B cell (primary cell): ENCODE measurements at regions of chr10 and their contacts with region 1.

Region 1: GRCh38 chr10:70404036-70404786 is at the start of gene EIF4EBP2:
- DNase-seq: peak; percentile 97
- ATAC-seq: peak; percentile 99
- H3K4me3 ChIP-seq: peak within 1 kb of the TSS; percentile 53 to 88 (median 77)
- H3K4me3 Mint-ChIP-seq: peak within 1 kb of the TSS; percentile 94
- H3K27ac ChIP-seq: peak within 1 kb of the TSS; percentile 11 to 84
- H3K27ac Mint-ChIP-seq: peak within 1 kb of the TSS; percentile 96
- H3K4me1 ChIP-seq: peaks cover 23 to 24% of the 10 kb centered on the region in 2 donors
- H3K4me1 Mint-ChIP-seq: peaks cover 43% of the 10 kb centered on the region
- H3K27me3 ChIP-seq: no peaks in the 10 kb centered on the region
- H3K27me3 Mint-ChIP-seq: no peaks in the 10 kb centered on the region
- CTCF ChIP-seq: no peak
- total RNA-seq, gene EIF4EBP2: 37.8 and 38.2 TPM in 2 replicates

Region 2: DNA sequence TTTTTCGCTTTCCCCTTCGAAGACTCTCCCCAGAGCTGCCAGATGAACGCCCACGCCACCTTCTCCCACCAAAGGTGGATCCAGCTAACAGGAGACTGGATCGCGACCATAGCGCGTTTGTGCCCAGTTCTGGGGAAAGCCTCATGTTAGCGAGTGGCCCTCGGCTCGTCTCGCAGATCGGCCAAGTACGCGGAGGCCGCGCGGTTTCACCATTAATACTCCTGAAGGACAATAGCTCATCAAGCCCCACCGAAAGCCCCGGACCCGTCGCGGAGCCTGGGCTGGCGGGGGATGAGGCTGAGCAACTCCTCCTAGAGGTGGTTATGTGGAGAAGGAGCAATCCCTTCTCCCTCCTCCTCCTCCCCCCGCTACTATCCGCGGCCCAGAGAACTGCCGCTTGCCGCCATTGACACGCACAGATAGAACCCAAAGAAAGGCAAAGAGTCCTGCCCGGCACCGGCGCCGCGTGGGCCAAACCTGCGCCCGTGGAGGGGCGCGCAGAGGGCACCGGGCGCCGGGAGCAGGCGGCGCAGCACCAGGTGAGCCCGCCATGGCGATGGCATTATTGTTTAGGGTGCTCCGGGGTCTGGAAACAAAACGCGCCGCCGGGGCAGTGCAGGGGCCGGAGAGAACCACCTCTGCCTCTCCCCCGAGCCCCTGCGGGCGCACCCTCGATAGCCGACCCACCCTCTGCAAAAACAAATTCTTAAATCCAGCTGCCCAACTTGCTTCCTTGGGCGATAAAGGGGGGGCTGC is 351.6 kb before region 1 on chr10 and contains the start of gene MACROH2A2:
- CTCF ChIA-PET with region 1: no interaction called
- POLR2A ChIA-PET with region 1: no interaction called
- intact Hi-C with region 1: no loop called
- DNase-seq: no peak
- ATAC-seq: no peak
- H3K4me3 ChIP-seq: no peak within 1 kb of the TSS
- H3K4me3 Mint-ChIP-seq: peak within 1 kb of the TSS; percentile 74
- H3K27ac ChIP-seq: no peak within 1 kb of the TSS
- H3K27ac Mint-ChIP-seq: no peak within 1 kb of the TSS
- H3K4me1 ChIP-seq: peaks cover 8 to 10% of the 10 kb centered on the region in 2 donors
- H3K4me1 Mint-ChIP-seq: peaks cover 10% of the 10 kb centered on the region
- H3K27me3 ChIP-seq: peaks cover 0 to 19% (median 13%) of the 10 kb centered on the region in 4 experiments
- H3K27me3 Mint-ChIP-seq: peaks cover 49% of the 10 kb centered on the region
- CTCF ChIP-seq: no peak
- total RNA-seq, gene MACROH2A2: not detected in 2 replicates

Region 3: GRCh38 chr10:70169649-70170364 is 234.4 kb before region 1 on chr10:
- CTCF ChIA-PET with region 1: interaction called, 4 read pairs
- POLR2A ChIA-PET with region 1: no interaction called
- intact Hi-C with region 1: loop called (anchors 1 kb)
- DNase-seq: no peak
- ATAC-seq: peak; percentile 18
- H3K4me3 ChIP-seq: peak overlapping the region; percentile 71 to 96 (median 86)
- H3K4me3 Mint-ChIP-seq: peak overlapping the region; percentile 91
- H3K27ac ChIP-seq: peak overlapping the region; percentile 80 to 93
- H3K27ac Mint-ChIP-seq: peak overlapping the region; percentile 94
- H3K4me1 ChIP-seq: peaks cover 21 to 27% of the 10 kb centered on the region in 2 donors
- H3K4me1 Mint-ChIP-seq: peaks cover 49% of the 10 kb centered on the region
- H3K27me3 ChIP-seq: no peaks in the 10 kb centered on the region
- H3K27me3 Mint-ChIP-seq: no peaks in the 10 kb centered on the region
- CTCF ChIP-seq: no peak

Region 4: DNA sequence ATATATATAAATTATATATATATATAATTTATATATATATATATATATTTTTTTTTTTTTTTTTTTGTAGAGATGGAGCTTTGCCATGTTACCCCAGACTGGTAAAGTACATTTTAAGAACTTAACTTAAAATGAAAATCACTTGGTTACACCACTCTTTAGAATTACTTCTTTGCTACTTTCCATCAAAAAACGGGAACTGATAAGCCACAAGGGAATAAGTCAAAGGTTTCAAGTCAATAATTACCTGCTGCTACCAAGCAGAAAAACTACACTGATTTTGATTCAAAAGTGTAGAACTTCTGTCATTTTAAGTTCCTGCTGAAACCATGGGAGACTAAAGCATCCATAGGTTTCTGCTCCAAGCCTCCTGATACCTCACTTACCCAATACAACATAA is 183.2 kb before region 1 on chr10:
- CTCF ChIA-PET with region 1: interaction called, 10 read pairs
- POLR2A ChIA-PET with region 1: no interaction called
- intact Hi-C with region 1: no loop called
- DNase-seq: no peak
- ATAC-seq: no peak
- H3K4me3 ChIP-seq: no peak overlapping the region
- H3K4me3 Mint-ChIP-seq: no peak overlapping the region
- H3K27ac ChIP-seq: no peak overlapping the region
- H3K27ac Mint-ChIP-seq: no peak overlapping the region
- H3K4me1 ChIP-seq: peaks cover 5% of the 10 kb centered on the region in 2 donors
- H3K4me1 Mint-ChIP-seq: peaks cover 12% of the 10 kb centered on the region
- H3K27me3 ChIP-seq: no peaks in the 10 kb centered on the region
- H3K27me3 Mint-ChIP-seq: no peaks in the 10 kb centered on the region
- CTCF ChIP-seq: no peak

Region 5: DNA sequence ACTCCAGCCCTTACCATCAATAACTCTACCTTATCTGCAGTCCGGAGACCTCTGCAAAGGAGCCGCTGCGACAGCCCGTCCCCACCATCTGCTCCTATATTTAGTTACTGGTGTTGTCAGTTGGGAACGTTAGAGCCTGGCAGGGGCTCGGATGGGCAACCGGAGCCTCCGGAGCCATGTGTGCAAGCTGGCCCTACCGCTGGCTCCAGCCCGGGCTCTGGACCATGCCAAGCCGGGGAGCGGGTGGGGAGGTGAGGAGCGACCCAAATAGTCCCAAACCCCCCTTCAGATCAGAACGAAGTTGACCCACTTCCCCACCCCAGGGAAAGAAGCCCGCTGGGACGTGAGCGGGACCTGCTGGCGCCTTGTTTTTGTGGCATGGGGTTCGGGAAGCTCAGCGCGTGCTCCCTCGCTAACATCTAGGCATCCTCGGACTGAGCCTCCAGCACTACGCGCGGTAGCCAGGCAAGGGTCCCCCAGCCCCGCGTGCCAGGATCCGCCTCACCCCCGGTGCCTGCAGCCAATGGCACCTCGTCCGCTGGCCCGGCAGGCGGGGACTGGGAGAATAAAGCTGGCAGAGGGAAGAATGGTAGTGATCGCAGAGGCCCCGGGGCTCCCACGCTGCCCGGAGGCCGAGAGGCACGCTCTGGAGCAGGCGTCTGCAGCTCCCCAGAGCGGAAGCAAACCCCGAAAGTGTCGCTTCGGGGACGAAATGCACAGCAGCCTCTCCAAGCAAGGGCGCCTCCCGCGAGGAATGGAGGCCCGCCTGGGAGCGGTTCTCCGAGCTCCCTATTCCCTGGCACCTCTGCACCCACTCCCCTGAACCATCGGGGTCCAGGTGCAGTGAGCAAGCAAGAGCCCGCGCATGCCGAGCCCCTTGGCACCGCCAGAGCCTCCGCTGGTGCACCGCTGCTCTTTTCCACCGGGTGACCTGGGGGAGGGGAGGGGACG is 22.5 kb before region 1 on chr10:
- CTCF ChIA-PET with region 1: interaction called, 3 read pairs
- POLR2A ChIA-PET with region 1: no interaction called
- intact Hi-C with region 1: loop called (anchors 1 kb)
- DNase-seq: no peak
- ATAC-seq: peak; percentile 8
- H3K4me3 ChIP-seq: peak overlapping the region; percentile 56 to 70 (median 64)
- H3K4me3 Mint-ChIP-seq: peak overlapping the region; percentile 90
- H3K27ac ChIP-seq: no peak overlapping the region
- H3K27ac Mint-ChIP-seq: peak overlapping the region; percentile 41
- H3K4me1 ChIP-seq: peaks cover 7 to 14% of the 10 kb centered on the region in 2 donors
- H3K4me1 Mint-ChIP-seq: peaks cover 12% of the 10 kb centered on the region
- H3K27me3 ChIP-seq: peaks cover 0 to 26% (median 3%) of the 10 kb centered on the region in 4 experiments
- H3K27me3 Mint-ChIP-seq: peaks cover 3% of the 10 kb centered on the region
- CTCF ChIP-seq: no peak

Region 6: GRCh38 chr10:70448236-70448635 is 44.0 kb after region 1 on chr10:
- CTCF ChIA-PET with region 1: no interaction called
- POLR2A ChIA-PET with region 1: no interaction called
- intact Hi-C with region 1: no loop called
- DNase-seq: no peak
- ATAC-seq: no peak
- H3K4me3 ChIP-seq: no peak overlapping the region
- H3K4me3 Mint-ChIP-seq: no peak overlapping the region
- H3K27ac ChIP-seq: no peak overlapping the region
- H3K27ac Mint-ChIP-seq: no peak overlapping the region
- H3K4me1 ChIP-seq: no peaks in the 10 kb centered on the region
- H3K4me1 Mint-ChIP-seq: no peaks in the 10 kb centered on the region
- H3K27me3 ChIP-seq: peaks cover 0 to 8% (median 1%) of the 10 kb centered on the region in 4 experiments
- H3K27me3 Mint-ChIP-seq: peaks cover 11% of the 10 kb centered on the region
- CTCF ChIP-seq: no peak

Region 7: GRCh38 chr10:70478191-70479164 is 74.3 kb after region 1 on chr10 and contains the start of gene PALD1:
- CTCF ChIA-PET with region 1: no interaction called
- POLR2A ChIA-PET with region 1: interaction called, 3 read pairs
- intact Hi-C with region 1: loop called (anchors 5 kb)
- DNase-seq: peak; percentile 63
- ATAC-seq: peak; percentile 40
- H3K4me3 ChIP-seq: peak within 1 kb of the TSS in 4 of 5 experiments; percentile 50 to 64 (median 58)
- H3K4me3 Mint-ChIP-seq: peak within 1 kb of the TSS; percentile 88
- H3K27ac ChIP-seq: peak within 1 kb of the TSS in 1 of 2 donors; percentile 59
- H3K27ac Mint-ChIP-seq: peak within 1 kb of the TSS; percentile 90
- H3K4me1 ChIP-seq: peaks cover 40 to 42% of the 10 kb centered on the region in 2 donors
- H3K4me1 Mint-ChIP-seq: peaks cover 55% of the 10 kb centered on the region
- H3K27me3 ChIP-seq: peaks cover 0 to 7% (median 0%) of the 10 kb centered on the region in 4 experiments
- H3K27me3 Mint-ChIP-seq: no peaks in the 10 kb centered on the region
- CTCF ChIP-seq: peak; percentile 6
- total RNA-seq, gene PALD1: 2.2 and 2.4 TPM in 2 replicates

Region 8: DNA sequence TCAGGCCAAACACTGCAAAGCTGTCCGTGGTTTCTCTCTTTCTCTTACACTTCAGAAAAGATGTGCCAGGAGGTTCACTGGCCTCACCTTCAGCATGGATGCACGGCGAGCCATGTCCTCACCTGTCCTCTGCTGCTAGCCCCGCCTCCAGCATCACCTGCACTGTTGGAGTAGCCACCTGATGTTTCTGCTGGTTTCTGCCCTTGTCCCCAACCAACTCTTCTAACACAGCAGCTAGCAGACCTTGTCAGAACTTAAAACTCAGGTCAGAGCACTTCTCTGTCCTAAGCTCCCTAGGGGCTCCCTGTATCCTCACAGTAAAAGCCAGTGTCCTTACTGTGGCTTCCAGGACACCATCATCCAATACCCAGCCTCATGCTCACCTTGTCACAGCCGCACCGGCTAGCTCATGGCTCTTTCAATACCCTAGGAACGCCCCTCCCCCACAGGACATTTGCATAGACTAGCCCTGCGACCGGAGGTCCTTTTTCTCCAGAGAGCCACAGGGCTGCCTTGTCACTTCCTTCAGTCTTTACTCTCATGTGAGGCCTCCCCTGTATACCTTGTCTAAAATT is 89.5 kb after region 1 on chr10:
- CTCF ChIA-PET with region 1: interaction called, 3 read pairs
- POLR2A ChIA-PET with region 1: interaction called, 3 read pairs
- intact Hi-C with region 1: loop called (anchors 5 kb)
- DNase-seq: peak; percentile 78
- ATAC-seq: peak; percentile 73
- H3K4me3 ChIP-seq: peak overlapping the region in 3 of 5 experiments; percentile 13 to 57 (median 28)
- H3K4me3 Mint-ChIP-seq: peak overlapping the region; percentile 68
- H3K27ac ChIP-seq: peak overlapping the region; percentile 81 to 88
- H3K27ac Mint-ChIP-seq: peak overlapping the region; percentile 89
- H3K4me1 ChIP-seq: peaks cover 65 to 69% of the 10 kb centered on the region in 2 donors
- H3K4me1 Mint-ChIP-seq: peaks cover 76% of the 10 kb centered on the region
- H3K27me3 ChIP-seq: no peaks in the 10 kb centered on the region
- H3K27me3 Mint-ChIP-seq: no peaks in the 10 kb centered on the region
- CTCF ChIP-seq: no peak

Region 9: DNA sequence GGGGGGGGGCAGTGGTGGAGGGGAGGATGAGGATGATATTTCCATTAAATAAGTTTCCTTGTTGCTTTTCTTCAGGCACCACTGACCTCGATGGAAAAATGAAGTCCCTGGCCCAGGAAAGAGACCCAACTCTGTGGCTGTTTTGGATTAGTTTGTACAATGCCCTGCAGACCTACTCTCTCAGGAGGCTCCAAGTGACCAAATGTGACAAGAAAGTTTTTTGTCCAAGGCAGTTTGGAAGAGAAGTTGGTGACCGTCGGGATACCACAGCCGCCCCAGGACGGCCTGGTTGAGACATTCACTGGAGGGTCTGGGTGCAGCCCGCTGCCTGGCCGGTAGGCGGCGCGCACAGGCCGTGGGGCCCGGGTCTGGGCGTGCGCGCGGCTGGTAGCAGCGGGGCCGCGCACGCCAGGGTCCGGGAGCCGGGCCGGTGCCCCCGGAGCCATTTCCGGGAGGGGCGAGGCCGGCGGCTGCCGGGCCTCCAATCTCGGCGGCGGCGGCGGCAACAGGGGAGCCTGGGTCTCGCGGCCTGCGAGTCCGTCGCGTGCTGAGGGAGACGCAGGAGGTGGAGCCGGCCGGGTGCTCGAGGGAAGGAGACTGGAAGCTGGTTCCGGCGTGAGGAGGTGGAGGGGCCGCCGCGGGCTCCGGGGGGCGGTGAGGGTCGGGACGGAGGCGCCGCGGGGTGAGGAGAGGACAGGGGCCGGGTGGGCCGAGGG is 411.5 kb after region 1 on chr10 and contains the start of gene SGPL1:
- CTCF ChIA-PET with region 1: no interaction called
- POLR2A ChIA-PET with region 1: no interaction called
- intact Hi-C with region 1: loop called (anchors 2 kb)
- DNase-seq: peak; percentile 89
- ATAC-seq: peak; percentile 94
- H3K4me3 ChIP-seq: peak within 1 kb of the TSS; percentile 61 to 79 (median 68)
- H3K4me3 Mint-ChIP-seq: peak within 1 kb of the TSS; percentile 99
- H3K27ac ChIP-seq: peak within 1 kb of the TSS; percentile 53 to 79
- H3K27ac Mint-ChIP-seq: peak within 1 kb of the TSS; percentile 97
- H3K4me1 ChIP-seq: peaks cover 7 to 17% of the 10 kb centered on the region in 2 donors
- H3K4me1 Mint-ChIP-seq: peaks cover 25% of the 10 kb centered on the region
- H3K27me3 ChIP-seq: no peaks in the 10 kb centered on the region
- H3K27me3 Mint-ChIP-seq: no peaks in the 10 kb centered on the region
- CTCF ChIP-seq: peak; percentile 97
- total RNA-seq, gene SGPL1: 41.9 and 46.2 TPM in 2 replicates

Region 10: GRCh38 chr10:70903262-70903921 is 499.2 kb after region 1 on chr10:
- CTCF ChIA-PET with region 1: no interaction called
- POLR2A ChIA-PET with region 1: no interaction called
- intact Hi-C with region 1: no loop called
- DNase-seq: peak; percentile 36
- ATAC-seq: no peak
- H3K4me3 ChIP-seq: no peak overlapping the region
- H3K4me3 Mint-ChIP-seq: no peak overlapping the region
- H3K27ac ChIP-seq: no peak overlapping the region
- H3K27ac Mint-ChIP-seq: no peak overlapping the region
- H3K4me1 ChIP-seq: no peaks in the 10 kb centered on the region
- H3K4me1 Mint-ChIP-seq: no peaks in the 10 kb centered on the region
- H3K27me3 ChIP-seq: peaks cover 0 to 6% (median 0%) of the 10 kb centered on the region in 4 experiments
- H3K27me3 Mint-ChIP-seq: peaks cover 27% of the 10 kb centered on the region
- CTCF ChIP-seq: peak; percentile 81